ENCODE measurements at regions of chr17 and their contacts with region 1.

Region 1: GRCh38 chr17:20009302-20010098 is at the start of gene SPECC1:
- DNase-seq: peak; percentile 83
- H3K4me3 Mint-ChIP-seq: peak within 1 kb of the TSS; percentile 85
- H3K27ac Mint-ChIP-seq: no peak within 1 kb of the TSS
- H3K4me1 Mint-ChIP-seq: peaks cover 14% of the 10 kb centered on the region
- H3K27me3 Mint-ChIP-seq: peaks cover 72% of the 10 kb centered on the region
- total RNA-seq, gene SPECC1: 3.7 to 4.9 TPM

Region 2: GRCh38 chr17:19992803-19993713 is 16.4 kb before region 1 on chr17:
- CTCF ChIA-PET with region 1: interaction called, 16 read pairs
- POLR2A ChIA-PET with region 1: no interaction called
- DNase-seq: peak; percentile 79
- H3K4me3 Mint-ChIP-seq: no peak overlapping the region
- H3K27ac Mint-ChIP-seq: peak overlapping the region; percentile 60
- H3K4me1 Mint-ChIP-seq: peaks cover 10% of the 10 kb centered on the region
- H3K27me3 Mint-ChIP-seq: peaks cover 8% of the 10 kb centered on the region

Region 3: GRCh38 chr17:20095336-20096080 is 86.0 kb after region 1 on chr17:
- CTCF ChIA-PET with region 1: no interaction called
- POLR2A ChIA-PET with region 1: no interaction called
- DNase-seq: no peak
- H3K4me3 Mint-ChIP-seq: no peak overlapping the region
- H3K27ac Mint-ChIP-seq: no peak overlapping the region
- H3K4me1 Mint-ChIP-seq: peaks cover 3% of the 10 kb centered on the region
- H3K27me3 Mint-ChIP-seq: peaks cover 3% of the 10 kb centered on the region

Measured in activated CD4-positive, alpha-beta T cell treated with anti-CD3 and anti-CD28 coated beads, Interleukin-2, amount 10 ng/mL, durations not matched to agents 7 days and 5 days (primary cell).